Breast epithelium (tissue), 4 donors: ENCODE measurements at regions of chr1 and their contacts with region 1.

Region 1: GRCh38 chr1:155812878-155813277 is 44.1 kb downstream of the GON4L start:
- DNase-seq: no peak
- H3K4me3 ChIP-seq: no peak overlapping the region
- H3K27ac ChIP-seq: no peak overlapping the region
- H3K4me1 ChIP-seq: no peaks in the 10 kb centered on the region
- H3K27me3 ChIP-seq: no peaks in the 10 kb centered on the region
- CTCF ChIP-seq: no peak
- POLR2A ChIP-seq: no peak

Region 2: GRCh38 chr1:155227261-155228095 is 585.4 kb before region 1 on chr1:
- intact Hi-C with region 1: no loop called
- DNase-seq: peak; percentile 97 to 99
- H3K4me3 ChIP-seq: peak overlapping the region; percentile 57 to 75 (median 65)
- H3K27ac ChIP-seq: peak overlapping the region; percentile 88 to 89
- H3K4me1 ChIP-seq: no peaks in the 10 kb centered on the region
- H3K27me3 ChIP-seq: no peaks in the 10 kb centered on the region
- CTCF ChIP-seq: no peak
- POLR2A ChIP-seq: peak; percentile 52

Region 3: DNA sequence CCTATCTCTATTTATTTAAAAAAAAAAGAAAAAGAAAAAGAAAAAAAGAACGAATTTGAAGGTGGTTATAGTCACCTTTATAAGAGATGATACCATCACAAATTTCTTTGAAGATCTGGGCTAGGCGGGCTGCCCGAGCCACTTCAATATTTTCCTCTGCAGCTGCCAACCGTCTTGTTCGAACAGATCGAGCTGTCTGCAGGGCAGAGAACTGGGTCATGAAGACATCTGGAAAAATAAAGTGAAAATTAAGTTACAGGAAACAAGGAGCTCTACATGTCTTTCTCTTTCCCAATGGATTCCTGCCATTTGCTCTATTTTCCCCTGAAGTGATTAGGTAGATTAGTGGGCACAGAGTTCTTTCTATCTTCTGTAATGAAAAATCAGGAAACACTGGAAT is 460.2 kb before region 1 on chr1:
- intact Hi-C with region 1: loop called (anchors 5 kb)
- DNase-seq: no peak
- H3K4me3 ChIP-seq: no peak overlapping the region
- H3K27ac ChIP-seq: no peak overlapping the region
- H3K4me1 ChIP-seq: no peaks in the 10 kb centered on the region
- H3K27me3 ChIP-seq: no peaks in the 10 kb centered on the region
- CTCF ChIP-seq: no peak
- POLR2A ChIP-seq: no peak